Right cardiac atrium (tissue), 5 donors: ENCODE measurements at regions of chr1 and their contacts with region 1.

Region 1: GRCh38 chr1:164695956-164696665 is 137.1 kb downstream of the PBX1 start:
- DNase-seq: no peak
- ATAC-seq: peak in 1 of 2 donors; percentile 75
- H3K4me3 ChIP-seq: no peak overlapping the region
- H3K27ac ChIP-seq: no peak overlapping the region
- H3K4me1 ChIP-seq: no peaks in the 10 kb centered on the region
- H3K27me3 ChIP-seq: no peaks in the 10 kb centered on the region

Region 2: GRCh38 chr1:164668491-164669400 is 27.4 kb before region 1 on chr1:
- intact Hi-C with region 1: loop called in 1 of 4 experiments (anchors 2 kb)
- DNase-seq: no peak
- ATAC-seq: no peak
- H3K4me3 ChIP-seq: no peak overlapping the region
- H3K27ac ChIP-seq: no peak overlapping the region
- H3K4me1 ChIP-seq: peaks cover 11% of the 10 kb centered on the region
- H3K27me3 ChIP-seq: no peaks in the 10 kb centered on the region